CD8-positive, alpha-beta T cell (primary cell): ENCODE measurements at regions of chr15 and their contacts with region 1.

Region 1: DNA sequence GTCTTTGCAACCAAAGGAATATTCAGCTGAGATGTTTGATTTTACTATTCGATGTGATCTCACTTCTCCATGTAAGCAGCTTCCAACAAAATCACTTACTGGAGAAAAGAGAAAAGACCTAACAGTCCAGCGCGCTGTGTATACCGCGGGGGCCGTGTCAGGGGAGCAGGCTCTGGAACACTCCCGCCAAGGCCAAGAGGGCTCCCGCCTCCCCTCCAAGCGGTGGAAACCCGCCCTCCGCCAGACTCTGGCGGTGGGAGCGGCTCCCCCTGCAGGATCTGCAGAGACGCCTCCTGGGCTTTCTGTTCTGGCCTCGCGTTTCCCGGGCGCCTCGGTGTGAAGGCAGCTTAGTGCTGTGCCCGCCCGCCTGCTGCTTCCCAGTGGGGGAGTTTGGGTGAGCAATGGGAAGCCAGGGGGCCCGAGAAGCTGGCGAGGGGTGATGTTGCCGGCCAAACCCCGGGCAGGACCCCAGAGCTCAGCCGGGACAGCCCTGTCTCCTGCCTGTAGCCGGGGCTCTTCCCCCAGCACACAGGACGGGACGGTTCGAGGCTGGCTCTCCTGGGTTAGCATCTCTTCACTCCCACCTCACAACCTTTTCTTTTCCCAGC is 36.3 kb downstream of the CHST14 start:
- DNase-seq: peak; percentile 18 to 80 (median 65)
- ATAC-seq: peak; percentile 74
- H3K4me3 ChIP-seq: peak overlapping the region in 1 of 2 experiments; percentile 8
- H3K4me3 Mint-ChIP-seq: no peak overlapping the region
- H3K27ac ChIP-seq: no peak overlapping the region
- H3K27ac Mint-ChIP-seq: no peak overlapping the region
- H3K4me1 ChIP-seq: peaks cover 20% of the 10 kb centered on the region
- H3K4me1 Mint-ChIP-seq: peaks cover 22% of the 10 kb centered on the region
- H3K27me3 ChIP-seq: peaks cover 18 to 19% of the 10 kb centered on the region in 2 experiments
- H3K27me3 Mint-ChIP-seq: peaks cover 59% of the 10 kb centered on the region
- CTCF ChIP-seq: peak; percentile 61

Region 2: GRCh38 chr15:40310001-40310959 is 196.8 kb before region 1 on chr15:
- CTCF ChIA-PET with region 1: no interaction called
- POLR2A ChIA-PET with region 1: no interaction called
- intact Hi-C with region 1: no loop called
- DNase-seq: peak in 7 of 9 experiments; percentile 47 to 80 (median 61)
- ATAC-seq: peak; percentile 15
- H3K4me3 ChIP-seq: no peak overlapping the region
- H3K4me3 Mint-ChIP-seq: peak overlapping the region; percentile 95
- H3K27ac ChIP-seq: no peak overlapping the region
- H3K27ac Mint-ChIP-seq: peak overlapping the region; percentile 86
- H3K4me1 ChIP-seq: peaks cover 41% of the 10 kb centered on the region
- H3K4me1 Mint-ChIP-seq: peaks cover 51% of the 10 kb centered on the region
- H3K27me3 ChIP-seq: no peaks in the 10 kb centered on the region
- H3K27me3 Mint-ChIP-seq: no peaks in the 10 kb centered on the region
- CTCF ChIP-seq: peak; percentile 55

Region 3: DNA sequence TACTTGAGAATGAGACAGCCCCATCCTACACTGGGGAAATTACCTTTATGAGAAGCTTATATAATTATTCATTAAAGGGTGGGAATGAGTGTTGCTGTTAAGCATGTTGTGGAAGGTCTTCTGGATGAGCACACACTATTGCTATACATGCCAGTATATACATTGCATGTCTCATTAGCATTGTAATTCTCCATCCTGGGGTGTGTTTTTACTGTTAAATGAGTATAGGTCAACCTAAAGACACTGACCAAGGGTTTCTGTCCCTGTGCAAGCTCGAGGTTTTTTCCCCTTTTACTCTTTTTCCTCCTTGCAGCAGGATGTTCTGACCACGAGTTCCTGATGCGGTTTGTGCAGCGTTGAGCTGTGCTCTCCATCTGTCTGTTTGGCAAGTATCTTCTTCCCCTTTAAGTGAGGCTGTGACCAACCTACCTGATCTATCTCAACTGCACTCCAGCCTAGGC is 108.6 kb before region 1 on chr15:
- CTCF ChIA-PET with region 1: no interaction called
- POLR2A ChIA-PET with region 1: no interaction called
- intact Hi-C with region 1: no loop called
- DNase-seq: peak in 1 of 9 experiments; percentile 40
- ATAC-seq: peak; percentile 46
- H3K4me3 ChIP-seq: no peak overlapping the region
- H3K4me3 Mint-ChIP-seq: peak overlapping the region; percentile 29
- H3K27ac ChIP-seq: no peak overlapping the region
- H3K27ac Mint-ChIP-seq: peak overlapping the region; percentile 46
- H3K4me1 ChIP-seq: peaks cover 16% of the 10 kb centered on the region
- H3K4me1 Mint-ChIP-seq: peaks cover 22% of the 10 kb centered on the region
- H3K27me3 ChIP-seq: no peaks in the 10 kb centered on the region
- H3K27me3 Mint-ChIP-seq: no peaks in the 10 kb centered on the region
- CTCF ChIP-seq: no peak

Region 4: GRCh38 chr15:40525855-40526254 is 18.8 kb after region 1 on chr15:
- CTCF ChIA-PET with region 1: interaction called, 10 read pairs
- POLR2A ChIA-PET with region 1: no interaction called
- intact Hi-C with region 1: no loop called
- DNase-seq: no peak
- ATAC-seq: no peak
- H3K4me3 ChIP-seq: no peak overlapping the region
- H3K4me3 Mint-ChIP-seq: no peak overlapping the region
- H3K27ac ChIP-seq: no peak overlapping the region
- H3K27ac Mint-ChIP-seq: no peak overlapping the region
- H3K4me1 ChIP-seq: no peaks in the 10 kb centered on the region
- H3K4me1 Mint-ChIP-seq: no peaks in the 10 kb centered on the region
- H3K27me3 ChIP-seq: no peaks in the 10 kb centered on the region
- H3K27me3 Mint-ChIP-seq: no peaks in the 10 kb centered on the region
- CTCF ChIP-seq: no peak